ENCODE measurements at regions of chr6 and their contacts with region 1.

Region 1: GRCh38 chr6:34161857-34162515 is 16.1 kb upstream of the GRM4 start:
- DNase-seq: no peak
- H3K4me3 ChIP-seq: no peak overlapping the region
- CTCF ChIP-seq: no peak

Region 2: DNA sequence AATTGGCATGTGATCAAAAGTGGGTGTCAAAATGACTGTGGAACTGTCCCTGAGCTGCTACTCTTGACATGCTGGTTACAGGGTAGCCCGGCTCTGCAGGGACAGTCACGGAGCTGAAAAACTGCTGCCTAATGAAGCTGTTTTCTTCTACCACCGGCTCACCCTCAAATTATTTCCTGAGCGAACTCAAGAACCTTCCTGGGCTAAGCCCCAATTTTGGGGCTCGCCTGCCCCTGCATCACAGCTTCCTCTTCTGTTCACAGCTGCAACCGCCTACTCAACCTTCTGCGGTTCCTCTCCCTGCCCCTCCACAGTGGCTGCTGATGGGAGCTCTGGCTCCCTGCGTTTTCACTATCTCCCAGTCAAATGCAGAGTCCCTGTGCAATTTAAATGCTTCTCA is 247.3 kb before region 1 on chr6:
- in situ Hi-C with region 1: no loop called
- DNase-seq: no peak
- H3K4me3 ChIP-seq: no peak overlapping the region
- CTCF ChIP-seq: no peak

Region 3: GRCh38 chr6:34235307-34236130 is 73.5 kb after region 1 on chr6:
- in situ Hi-C with region 1: no loop called
- DNase-seq: no peak
- H3K4me3 ChIP-seq: peak overlapping the region; percentile 56
- CTCF ChIP-seq: no peak

Region 4: GRCh38 chr6:34602318-34603111 is 440.5 kb after region 1 on chr6:
- in situ Hi-C with region 1: loop called (anchors 10 kb)
- DNase-seq: no peak
- H3K4me3 ChIP-seq: no peak overlapping the region
- CTCF ChIP-seq: no peak